ENCODE measurements at regions of chr13 and their contacts with region 1.

Region 1: DNA sequence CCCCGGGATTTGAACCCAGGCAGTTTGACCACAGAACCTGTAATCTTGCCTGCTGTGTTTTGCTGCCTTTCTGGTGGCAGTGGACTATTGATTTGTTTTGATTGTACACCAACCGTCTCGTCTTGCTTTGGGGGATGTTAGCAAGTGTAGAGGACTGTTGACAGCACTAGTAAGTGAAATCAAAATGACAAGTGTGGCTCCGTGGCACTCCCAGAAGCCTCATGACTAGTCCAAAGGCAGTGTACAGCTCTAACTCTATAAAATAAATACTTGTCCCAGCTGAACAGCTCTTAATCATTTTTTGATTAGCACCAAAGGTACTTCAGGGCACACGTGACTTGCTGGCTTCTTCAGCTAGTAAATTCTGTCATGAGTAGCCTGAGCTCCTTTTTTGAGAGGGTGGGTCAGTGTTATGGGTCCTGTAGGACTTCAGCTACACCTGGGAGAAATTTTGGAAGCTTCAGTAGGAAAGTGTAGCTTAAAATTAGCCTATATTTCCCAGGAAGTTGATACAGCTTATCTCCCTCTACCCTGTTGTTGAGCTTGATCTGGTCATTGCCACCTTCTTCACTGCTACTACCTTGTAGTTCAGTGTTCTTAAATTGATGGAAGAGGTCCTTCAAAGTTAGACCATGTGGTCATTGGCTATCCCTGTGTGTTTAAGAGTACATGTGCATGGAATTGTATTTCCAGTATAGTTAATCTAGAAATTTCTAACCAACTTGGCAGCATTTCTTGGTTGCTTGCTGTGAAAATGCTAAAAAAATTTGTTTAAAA is 15.1 kb downstream of the TM9SF2 start:
- DNase-seq: no peak
- H3K4me3 ChIP-seq: no peak overlapping the region
- H3K27ac ChIP-seq: no peak overlapping the region
- H3K4me1 ChIP-seq: no peaks in the 10 kb centered on the region
- H3K27me3 ChIP-seq: no peaks in the 10 kb centered on the region
- CTCF ChIP-seq: no peak

Region 2: DNA sequence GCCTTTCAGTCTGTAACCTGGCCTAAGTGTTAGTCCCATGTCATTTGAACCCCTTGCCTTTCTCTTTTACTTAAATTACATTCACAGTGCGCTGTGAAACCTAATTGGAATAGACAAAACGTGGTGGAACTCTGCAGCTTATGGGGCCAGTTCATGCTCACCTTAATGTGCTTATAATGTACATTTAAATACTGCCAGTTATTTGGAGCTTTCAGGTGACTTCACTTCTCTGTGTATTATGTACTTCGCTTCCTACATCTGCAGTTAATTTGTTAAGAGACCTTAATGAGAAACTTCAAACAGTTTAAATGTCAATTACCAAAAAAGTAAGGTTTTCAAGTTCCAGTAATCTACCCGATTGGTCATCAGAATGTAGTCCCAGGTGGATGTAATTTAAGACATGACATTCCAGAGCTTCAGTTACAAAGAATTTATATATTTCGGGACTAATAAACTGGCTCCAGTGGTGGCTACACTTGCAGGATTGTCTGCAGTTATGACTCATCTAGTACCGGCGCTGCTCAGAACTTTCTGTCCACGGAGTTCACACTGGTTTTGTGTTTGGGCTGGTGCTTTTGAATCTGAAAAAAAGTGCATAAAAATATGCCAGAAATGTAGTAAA is 110.2 kb after region 1 on chr13:
- CTCF ChIA-PET with region 1: interaction called, 12 read pairs
- POLR2A ChIA-PET with region 1: no interaction called
- intact Hi-C with region 1: no loop called
- DNase-seq: no peak
- H3K4me3 ChIP-seq: no peak overlapping the region
- H3K27ac ChIP-seq: no peak overlapping the region
- H3K4me1 ChIP-seq: no peaks in the 10 kb centered on the region
- H3K27me3 ChIP-seq: no peaks in the 10 kb centered on the region
- CTCF ChIP-seq: no peak

Measured in PC-9 (cell line).